ENCODE measurements at regions of chr5 and their contacts with region 1.

Region 1: DNA sequence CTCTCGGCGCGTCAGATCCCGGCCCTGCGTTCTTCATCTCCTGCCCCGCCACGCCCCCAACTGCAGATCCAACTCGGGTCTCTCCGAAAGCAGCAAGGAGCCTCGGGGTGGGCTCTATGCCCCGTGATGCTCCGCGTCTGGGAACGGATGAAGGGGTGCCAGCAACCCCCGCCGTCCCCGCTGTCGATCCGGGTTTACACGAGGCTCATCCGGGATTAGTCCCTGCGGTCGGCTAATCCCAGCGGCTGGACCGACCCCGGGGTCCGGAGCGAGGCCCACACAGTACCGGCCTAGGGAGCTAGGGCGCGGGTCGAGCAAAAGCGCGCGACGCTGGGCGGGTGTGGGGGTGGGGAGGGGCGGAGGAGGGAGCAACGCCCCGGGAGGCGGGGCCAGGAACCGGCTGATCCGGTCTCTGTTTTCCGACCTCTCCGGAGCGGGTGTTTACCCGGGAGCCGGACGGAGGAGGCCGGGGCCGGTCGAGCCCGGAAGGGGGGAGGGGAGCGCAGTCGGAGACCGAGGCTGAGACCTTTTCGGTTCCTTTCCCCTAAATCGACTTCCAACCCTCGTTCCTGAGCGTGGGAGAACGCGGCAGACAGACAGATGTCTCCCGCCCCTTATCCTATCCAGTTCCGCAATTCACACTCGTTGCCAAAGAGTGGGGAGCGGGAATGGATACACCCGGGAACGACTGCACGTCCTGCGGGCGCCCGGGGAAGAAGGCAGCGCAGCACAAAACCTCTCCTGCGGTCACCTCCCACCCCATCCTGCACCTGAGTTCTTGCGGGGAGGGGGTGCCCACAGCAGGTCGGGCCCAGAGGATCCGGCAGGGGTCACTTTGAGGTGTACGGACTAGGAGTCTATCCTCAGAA is 28.6 kb downstream of the PCDH1 start:
- DNase-seq: peak; percentile 54 to 74 (median 56)
- H3K4me3 ChIP-seq: peak overlapping the region; percentile 83 to 88
- H3K4me3 Mint-ChIP-seq: peak overlapping the region; percentile 90 to 93 (median 92)
- H3K27ac ChIP-seq: peak overlapping the region; percentile 66
- H3K27ac Mint-ChIP-seq: peak overlapping the region; percentile 75 to 93 (median 88)
- H3K4me1 ChIP-seq: peaks cover 9% of the 10 kb centered on the region
- H3K4me1 Mint-ChIP-seq: peaks cover 5 to 14% (median 11%) of the 10 kb centered on the region in 4 donors
- H3K27me3 ChIP-seq: no peaks in the 10 kb centered on the region
- H3K27me3 Mint-ChIP-seq: peaks cover 1 to 5% of the 10 kb centered on the region in 2 donors

Region 2: DNA sequence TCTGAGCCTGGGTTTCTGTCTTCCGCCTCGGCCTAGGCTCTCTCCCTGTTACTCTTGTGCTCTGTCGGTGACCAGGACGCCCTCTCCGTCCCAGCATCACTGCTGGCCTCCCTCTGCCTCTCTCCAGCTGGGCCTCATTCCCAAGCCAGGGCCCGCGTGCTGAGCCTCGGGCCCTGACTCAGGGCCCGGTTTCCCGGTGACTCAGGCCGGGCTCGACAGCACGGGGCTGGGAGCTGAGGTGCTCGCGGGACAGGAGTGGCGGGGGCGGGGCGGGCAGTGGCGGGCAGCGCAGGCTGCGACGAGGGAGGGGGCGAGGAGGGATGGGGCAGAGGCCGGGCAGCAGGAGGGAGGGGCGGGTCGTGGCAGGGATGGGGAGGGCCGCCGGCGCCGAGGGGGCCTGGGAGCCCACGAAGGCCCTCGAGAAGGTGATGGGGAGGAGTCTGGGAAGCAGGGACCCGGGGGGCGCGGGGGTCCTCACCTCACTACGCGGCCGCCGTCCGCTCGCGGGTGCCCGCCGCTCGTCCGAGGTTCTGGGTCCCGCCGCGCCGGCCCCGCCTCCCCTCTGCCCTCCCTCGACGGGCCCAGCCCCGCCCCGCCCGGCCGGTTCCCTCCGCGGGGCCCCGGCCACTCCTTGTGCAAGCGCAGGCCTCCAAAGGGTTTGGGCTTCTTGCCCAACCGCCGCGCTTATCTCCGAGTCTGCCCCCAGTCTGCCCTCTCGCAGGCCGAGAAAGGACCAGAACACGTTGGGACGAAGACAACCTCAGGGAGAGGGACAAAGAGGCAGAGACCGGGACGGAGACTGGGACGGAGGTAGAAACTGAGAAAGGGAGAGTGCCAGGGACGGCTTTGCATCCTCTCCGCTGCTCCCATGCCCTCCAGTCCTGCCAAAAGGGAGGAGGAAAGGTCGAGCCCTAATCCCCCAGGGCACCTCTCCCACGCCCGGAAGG is 167.6 kb before region 1 on chr5 and contains the start of gene ARAP3:
- CTCF ChIA-PET with region 1: no interaction called
- POLR2A ChIA-PET with region 1: interaction called, 11 read pairs
- intact Hi-C with region 1: no loop called
- DNase-seq: peak in 2 of 5 donors; percentile 24 to 47
- H3K4me3 ChIP-seq: peak within 1 kb of the TSS in 1 of 2 donors; percentile 17
- H3K4me3 Mint-ChIP-seq: peak within 1 kb of the TSS; percentile 78 to 86 (median 83)
- H3K27ac ChIP-seq: no peak within 1 kb of the TSS
- H3K27ac Mint-ChIP-seq: peak within 1 kb of the TSS; percentile 47 to 91 (median 77)
- H3K4me1 ChIP-seq: peaks cover 33% of the 10 kb centered on the region
- H3K4me1 Mint-ChIP-seq: peaks cover 14 to 36% (median 26%) of the 10 kb centered on the region in 4 donors
- H3K27me3 ChIP-seq: no peaks in the 10 kb centered on the region
- H3K27me3 Mint-ChIP-seq: peaks cover 0 to 2% of the 10 kb centered on the region in 2 donors
- total RNA-seq, gene ARAP3: 14.7 to 16.4 TPM

Region 3: GRCh38 chr5:141923448-141924352 is 74.1 kb after region 1 on chr5 and contains the start of gene DELE1:
- CTCF ChIA-PET with region 1: no interaction called
- POLR2A ChIA-PET with region 1: interaction called, 22 read pairs
- intact Hi-C with region 1: loop called (anchors 1 kb)
- DNase-seq: peak; percentile 89 to 92 (median 92)
- H3K4me3 ChIP-seq: peak within 1 kb of the TSS; percentile 76 to 93
- H3K4me3 Mint-ChIP-seq: peak within 1 kb of the TSS; percentile 87 to 97 (median 92)
- H3K27ac ChIP-seq: peak within 1 kb of the TSS; percentile 99
- H3K27ac Mint-ChIP-seq: peak within 1 kb of the TSS; percentile 95 to 98 (median 97)
- H3K4me1 ChIP-seq: peaks cover 31% of the 10 kb centered on the region
- H3K4me1 Mint-ChIP-seq: peaks cover 14 to 48% (median 34%) of the 10 kb centered on the region in 4 donors
- H3K27me3 ChIP-seq: no peaks in the 10 kb centered on the region
- H3K27me3 Mint-ChIP-seq: no peaks in the 10 kb centered on the region
- total RNA-seq, gene DELE1: 73.2 to 83.1 TPM